K562 (cell line): ENCODE measurements at regions of chr1 and their contacts with region 1.

Region 1: GRCh38 chr1:46442317-46443161 is 47.1 kb upstream of the DMBX1 start:
- DNase-seq: peak; percentile 93 to 98 (median 94)
- ATAC-seq: peak; percentile 93
- H3K4me3 ChIP-seq: peak overlapping the region; percentile 28
- H3K27ac ChIP-seq: peak overlapping the region; percentile 82
- H3K4me1 ChIP-seq: peaks cover 23 to 32% of the 10 kb centered on the region in 2 experiments
- H3K27me3 ChIP-seq: no peaks in the 10 kb centered on the region
- CTCF ChIP-seq: peak; percentile 92 to 99 (median 97)
- EP300 ChIP-seq: peak; percentile 86
- POLR2A ChIP-seq: peak; percentile 37; the same call in 1 of the 2 replicates
- RAD21 ChIP-seq: peak; percentile 66 to 79

Region 2: GRCh38 chr1:46477153-46477929 is 34.8 kb after region 1 on chr1:
- CTCF ChIA-PET with region 1: interaction called, 10 read pairs
- POLR2A ChIA-PET with region 1: interaction called, 3 read pairs
- in situ Hi-C with region 1: no loop called
- intact Hi-C with region 1: loop called (anchors 1 kb)
- DNase-seq: peak; percentile 92 to 94 (median 93)
- ATAC-seq: peak; percentile 89
- H3K4me3 ChIP-seq: no peak overlapping the region
- H3K27ac ChIP-seq: no peak overlapping the region
- H3K4me1 ChIP-seq: peaks cover 19 to 27% of the 10 kb centered on the region in 2 experiments
- H3K27me3 ChIP-seq: no peaks in the 10 kb centered on the region
- CTCF ChIP-seq: peak; percentile 97 to 99 (median 99)
- EP300 ChIP-seq: peak; percentile 37; the same call in 1 of the 2 replicates
- POLR2A ChIP-seq: no peak
- RAD21 ChIP-seq: peak; percentile 99 to 100

Region 3: GRCh38 chr1:46539972-46540371 is 97.4 kb after region 1 on chr1:
- CTCF ChIA-PET with region 1: interaction called, 13 read pairs
- POLR2A ChIA-PET with region 1: interaction called, 3 read pairs
- in situ Hi-C with region 1: no loop called
- intact Hi-C with region 1: no loop called
- DNase-seq: peak in 1 of 4 experiments; percentile 14
- ATAC-seq: no peak
- H3K4me3 ChIP-seq: no peak overlapping the region
- H3K27ac ChIP-seq: no peak overlapping the region
- H3K4me1 ChIP-seq: peaks cover 12 to 22% of the 10 kb centered on the region in 2 experiments
- H3K27me3 ChIP-seq: no peaks in the 10 kb centered on the region
- CTCF ChIP-seq: no peak
- EP300 ChIP-seq: no peak
- POLR2A ChIP-seq: no peak
- RAD21 ChIP-seq: no peak

Region 4: GRCh38 chr1:46718727-46719622 is 276.4 kb after region 1 on chr1 and contains the start of gene EFCAB14:
- CTCF ChIA-PET with region 1: no interaction called
- POLR2A ChIA-PET with region 1: no interaction called
- in situ Hi-C with region 1: no loop called
- intact Hi-C with region 1: loop called (anchors 2 kb)
- DNase-seq: peak; percentile 99 to 100 (median 100)
- ATAC-seq: peak; percentile 98
- H3K4me3 ChIP-seq: peak within 1 kb of the TSS; percentile 95
- H3K27ac ChIP-seq: peak within 1 kb of the TSS; percentile 89
- H3K4me1 ChIP-seq: peaks cover 29 to 38% of the 10 kb centered on the region in 2 experiments
- H3K27me3 ChIP-seq: no peaks in the 10 kb centered on the region
- CTCF ChIP-seq: no peak
- EP300 ChIP-seq: no peak; the same call in 1 of the 2 replicates
- POLR2A ChIP-seq: peak; percentile 89
- RAD21 ChIP-seq: no peak
- polyA plus RNA-seq, gene EFCAB14: 7.3 to 9.4 TPM